SK-N-SH (cell line): ENCODE measurements at regions of chr17 and their contacts with region 1.

Region 1: DNA sequence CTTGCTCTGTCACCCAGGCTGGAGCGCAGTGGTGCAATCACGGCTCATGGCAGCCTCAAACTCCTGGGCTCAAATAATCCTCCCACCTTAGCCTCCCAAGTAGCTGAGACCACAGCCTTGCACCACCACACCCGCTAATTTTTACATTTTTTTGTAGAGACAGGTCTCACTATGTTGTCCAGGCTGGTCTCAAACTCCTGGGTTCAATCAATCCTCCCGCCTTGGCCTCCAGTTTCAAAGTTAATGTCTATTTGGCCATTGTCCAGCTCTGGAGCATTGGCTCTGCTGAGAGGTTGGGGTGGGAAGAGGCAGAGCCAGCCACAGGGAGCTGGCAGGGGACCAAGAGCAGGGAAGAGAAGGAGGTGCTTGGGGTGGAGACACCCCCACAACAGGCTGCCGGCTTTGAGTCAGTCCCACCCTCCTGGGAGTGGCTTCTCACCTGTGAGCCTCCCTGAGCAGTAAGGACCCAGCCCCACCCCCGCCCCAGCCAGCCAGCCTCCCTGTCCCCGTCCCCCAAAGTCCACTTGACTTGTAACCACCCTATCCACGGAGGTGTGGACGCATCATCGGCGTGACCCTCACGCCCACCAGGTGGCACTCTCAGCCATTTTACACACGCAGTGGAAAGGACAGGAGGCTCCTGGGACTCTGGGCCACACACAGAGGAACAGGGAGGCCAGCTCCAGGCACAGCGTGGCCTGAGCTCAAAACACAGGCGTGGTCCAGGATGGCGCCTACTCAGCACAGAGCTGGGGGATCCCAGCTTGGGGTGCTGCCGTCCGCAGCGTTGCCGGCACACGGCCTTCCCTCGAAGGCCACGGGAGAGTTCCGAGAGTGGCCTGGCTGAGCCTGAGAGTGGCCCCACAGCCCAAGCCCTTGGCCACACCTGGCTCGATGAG is 22.8 kb upstream of the PVALEF start:
- DNase-seq: peak; percentile 96
- H3K4me3 ChIP-seq: no peak overlapping the region; a peak in 1 of 4 replicates
- H3K27ac ChIP-seq: no peak overlapping the region
- H3K4me1 ChIP-seq: peaks cover 0 to 3% of the 10 kb centered on the region in 2 experiments; a peak in 1 of 4 replicates
- H3K27me3 ChIP-seq: no peaks in the 10 kb centered on the region
- CTCF ChIP-seq: peak; percentile 74
- EP300 ChIP-seq: no peak
- RAD21 ChIP-seq: peak; percentile 90

Region 2: DNA sequence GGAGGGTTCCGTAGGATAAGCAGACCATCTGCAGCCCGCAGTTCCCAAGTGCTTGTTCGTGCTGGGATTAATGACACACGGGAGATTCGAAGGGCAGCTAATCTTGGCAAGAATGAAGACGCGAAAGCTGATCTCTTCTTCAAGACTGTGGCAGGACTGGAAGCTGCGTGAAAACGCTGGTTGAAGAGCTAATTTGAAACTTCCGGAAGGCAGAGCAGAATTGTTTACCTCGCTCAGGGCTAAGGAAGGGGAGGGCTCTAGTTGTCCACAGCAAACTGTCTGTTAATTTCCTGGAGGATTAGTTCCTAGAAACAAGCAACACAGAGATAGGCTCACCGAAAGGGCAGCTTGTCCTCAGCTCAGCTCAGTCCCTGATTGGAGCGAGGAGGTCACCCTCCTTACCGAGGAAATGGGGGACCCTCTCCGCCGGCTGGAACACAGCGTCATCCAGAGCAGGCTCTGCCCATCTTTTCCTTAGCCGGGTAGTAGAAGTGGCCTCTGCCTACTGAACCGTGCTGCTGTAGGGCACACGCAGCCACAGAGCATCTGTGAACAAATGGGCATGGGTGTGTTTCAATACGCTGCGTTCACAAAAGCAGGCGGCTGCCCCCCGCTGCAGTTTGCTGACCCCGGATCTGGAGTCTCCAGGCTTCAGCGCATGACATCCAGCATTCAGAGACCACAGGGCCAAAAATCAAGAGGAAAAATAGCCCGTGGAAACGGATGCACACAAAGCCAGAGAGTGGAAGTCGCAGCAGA is 124.3 kb before region 1 on chr17:
- CTCF ChIA-PET with region 1: interaction called, 15 read pairs
- POLR2A ChIA-PET with region 1: no interaction called
- DNase-seq: no peak
- H3K4me3 ChIP-seq: no peak overlapping the region
- H3K27ac ChIP-seq: no peak overlapping the region
- H3K4me1 ChIP-seq: peaks cover 0 to 11% of the 10 kb centered on the region in 2 experiments; a peak in 1 of 4 replicates
- H3K27me3 ChIP-seq: peaks cover 10% of the 10 kb centered on the region
- CTCF ChIP-seq: no peak
- EP300 ChIP-seq: no peak
- RAD21 ChIP-seq: no peak

Region 3: DNA sequence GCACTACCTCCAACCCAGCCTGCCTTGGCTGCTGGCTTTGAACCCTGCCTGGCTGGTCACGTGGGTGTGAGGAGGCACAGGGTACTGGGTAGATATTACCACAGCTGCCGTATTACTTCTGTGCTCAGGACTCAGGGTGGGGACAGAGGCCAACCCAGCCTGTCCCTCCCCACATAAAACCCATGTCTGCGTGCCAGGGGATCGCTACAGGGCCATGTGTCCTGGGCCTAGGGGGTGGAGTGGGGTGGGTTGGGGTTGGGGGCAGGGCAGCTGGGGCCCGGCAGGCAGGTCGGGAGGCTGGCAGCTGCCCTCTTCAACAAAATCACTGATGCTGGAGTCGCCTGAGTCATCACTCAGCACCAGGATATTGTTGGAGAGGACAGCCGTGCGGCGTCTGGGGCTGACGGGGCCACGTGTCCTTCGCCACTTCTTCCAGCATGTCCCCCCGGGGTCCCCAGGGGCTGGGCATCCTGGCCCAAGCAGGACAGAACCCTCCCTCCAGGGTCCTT is 16.9 kb before region 1 on chr17:
- CTCF ChIA-PET with region 1: interaction called, 28 read pairs
- POLR2A ChIA-PET with region 1: no interaction called
- DNase-seq: no peak
- H3K4me3 ChIP-seq: no peak overlapping the region
- H3K27ac ChIP-seq: no peak overlapping the region
- H3K4me1 ChIP-seq: no peaks in the 10 kb centered on the region; a peak in 1 of 4 replicates
- H3K27me3 ChIP-seq: peaks cover 6% of the 10 kb centered on the region; the same call in 1 of the 2 replicates
- CTCF ChIP-seq: no peak
- EP300 ChIP-seq: no peak
- RAD21 ChIP-seq: no peak

Region 4: GRCh38 chr17:81165246-81166032 is 22.9 kb after region 1 on chr17 and contains the start of gene PVALEF:
- CTCF ChIA-PET with region 1: interaction called, 42 read pairs
- POLR2A ChIA-PET with region 1: no interaction called
- DNase-seq: no peak
- H3K4me3 ChIP-seq: peak within 1 kb of the TSS; percentile 46 to 53
- H3K27ac ChIP-seq: peak within 1 kb of the TSS in 1 of 2 experiments; percentile 85; a peak in 2 of 4 replicates
- H3K4me1 ChIP-seq: peaks cover 0 to 26% of the 10 kb centered on the region in 2 experiments; a peak in 1 of 4 replicates
- H3K27me3 ChIP-seq: peaks cover 22% of the 10 kb centered on the region; the same call in 1 of the 2 replicates
- CTCF ChIP-seq: no peak
- EP300 ChIP-seq: no peak
- RAD21 ChIP-seq: no peak
- polyA plus RNA-seq, gene PVALEF: not detected in 2 replicates

Region 5: DNA sequence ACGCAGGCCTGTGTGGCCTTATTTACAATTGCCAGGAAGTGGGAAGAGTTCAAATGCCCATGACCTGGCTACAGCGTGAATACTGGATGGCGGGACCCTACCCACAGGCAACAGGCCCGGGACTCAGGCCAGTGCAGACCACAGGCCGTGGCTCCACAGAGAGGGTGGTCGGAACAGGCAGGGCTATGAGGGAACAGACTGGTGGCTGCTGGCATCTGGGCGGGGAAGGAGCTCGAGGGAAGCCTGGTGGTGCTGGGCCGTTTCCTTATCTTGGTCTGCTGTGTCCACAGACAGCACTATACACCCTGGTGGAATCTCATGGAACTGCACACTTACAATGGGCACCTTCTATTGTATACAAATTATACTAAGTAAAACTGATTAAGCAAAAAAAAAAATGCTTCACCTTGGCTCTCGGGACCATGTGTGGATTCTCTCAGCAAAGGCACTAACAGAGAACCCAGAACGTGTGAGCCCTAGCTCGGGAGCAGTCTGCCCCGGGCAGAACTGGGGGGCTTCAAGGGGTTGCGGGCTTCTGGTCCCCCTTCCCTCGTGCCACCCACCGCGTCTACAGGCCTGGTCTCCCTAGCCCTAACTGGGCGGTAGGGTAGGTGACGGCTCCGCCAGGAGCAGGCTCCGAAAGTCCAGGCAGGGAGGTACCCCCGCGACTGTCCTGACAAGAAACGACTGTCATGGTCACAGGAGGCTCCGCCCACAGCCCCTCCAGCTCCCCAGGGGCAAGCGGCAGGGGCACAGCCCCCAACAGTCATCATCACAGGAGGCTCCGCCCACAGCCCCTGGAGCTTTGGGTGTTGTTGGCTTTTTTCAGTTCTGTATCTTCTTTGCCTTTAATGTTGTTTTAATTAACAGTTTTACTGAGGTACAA is 58.4 kb after region 1 on chr17:
- CTCF ChIA-PET with region 1: interaction called, 147 read pairs
- POLR2A ChIA-PET with region 1: interaction called, 3 read pairs
- DNase-seq: peak; percentile 91
- H3K4me3 ChIP-seq: no peak overlapping the region
- H3K27ac ChIP-seq: peak overlapping the region in 1 of 2 experiments; percentile 13; a peak in 1 of 4 replicates
- H3K4me1 ChIP-seq: peaks cover 0 to 3% of the 10 kb centered on the region in 2 experiments; a peak in 1 of 4 replicates
- H3K27me3 ChIP-seq: no peaks in the 10 kb centered on the region
- CTCF ChIP-seq: peak; percentile 73
- EP300 ChIP-seq: no peak
- RAD21 ChIP-seq: peak; percentile 75

Region 6: DNA sequence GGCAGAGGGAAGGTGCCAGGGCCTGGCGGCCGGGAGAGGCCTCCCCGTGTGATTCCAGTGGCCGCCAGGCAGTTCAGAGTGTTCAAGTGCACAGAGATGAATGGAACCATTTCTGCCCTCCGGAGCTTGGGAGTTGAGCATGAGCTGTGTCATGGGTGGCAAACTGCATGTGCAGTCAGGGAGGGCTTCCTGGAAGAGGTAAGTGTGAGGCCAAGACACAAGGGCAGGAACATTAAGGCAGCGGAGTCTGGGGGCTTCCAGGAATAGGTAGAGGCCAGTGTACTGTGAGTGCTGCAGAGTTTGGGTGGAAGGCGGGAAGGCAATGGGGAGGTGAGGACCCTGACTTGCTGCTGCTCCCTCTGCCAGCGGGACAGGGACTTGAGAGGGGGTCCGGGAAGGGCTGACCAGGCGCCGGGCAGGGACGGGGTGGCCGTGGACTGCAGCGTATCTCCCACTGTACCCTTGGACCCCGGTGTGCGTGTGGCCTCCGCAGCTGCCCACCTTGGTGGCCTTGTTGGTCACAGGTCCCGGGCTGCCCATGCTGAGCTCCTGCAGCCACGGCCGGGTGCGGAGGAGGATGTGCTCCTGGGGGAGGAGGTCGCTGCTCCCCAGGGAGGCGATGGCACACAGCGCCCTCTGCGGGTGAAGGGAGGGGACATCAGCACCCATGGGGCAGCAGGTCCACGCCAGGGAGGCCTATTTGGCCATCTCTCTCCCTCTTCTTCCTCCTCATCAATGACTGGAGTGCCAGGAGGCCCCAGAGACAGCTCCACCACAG is 87.7 kb after region 1 on chr17:
- CTCF ChIA-PET with region 1: interaction called, 133 read pairs
- POLR2A ChIA-PET with region 1: no interaction called
- DNase-seq: peak; percentile 80
- H3K4me3 ChIP-seq: no peak overlapping the region
- H3K27ac ChIP-seq: no peak overlapping the region
- H3K4me1 ChIP-seq: no peaks in the 10 kb centered on the region
- H3K27me3 ChIP-seq: no peaks in the 10 kb centered on the region
- CTCF ChIP-seq: peak; percentile 52
- EP300 ChIP-seq: no peak
- RAD21 ChIP-seq: peak; percentile 32